Thyroid gland (tissue), 4 donors: ENCODE measurements at regions of chr10 and their contacts with region 1.

Region 1: DNA sequence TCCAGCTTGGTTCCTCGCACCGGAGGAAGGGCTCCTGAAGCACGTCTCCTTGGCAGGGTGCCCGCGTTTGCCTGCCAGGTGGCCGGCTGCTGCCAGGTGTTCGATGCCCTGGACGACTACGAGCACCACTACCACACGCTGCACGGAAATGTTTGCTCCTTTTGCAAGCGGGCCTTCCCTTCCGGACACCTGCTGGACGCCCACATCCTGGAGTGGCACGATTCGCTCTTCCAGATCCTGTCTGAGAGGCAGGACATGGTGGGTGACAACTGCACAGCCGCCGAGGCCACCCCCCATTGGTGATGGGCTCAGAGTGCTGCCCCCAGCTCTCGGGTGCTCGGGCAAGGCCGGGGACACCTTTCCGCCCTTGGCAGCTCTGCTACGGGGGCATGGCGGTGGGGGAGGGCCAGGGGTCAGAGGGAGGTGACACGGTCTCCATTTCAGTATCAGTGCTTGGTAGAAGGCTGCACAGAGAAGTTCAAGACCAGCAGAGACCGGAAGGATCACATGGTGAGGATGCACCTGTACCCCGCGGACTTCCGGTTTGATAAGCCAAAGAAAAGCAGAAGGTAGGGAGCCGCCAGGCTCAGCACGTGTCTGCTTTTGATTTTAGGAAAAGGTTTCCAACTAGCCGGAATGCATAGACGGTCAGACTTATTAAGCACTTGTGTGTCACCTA is 1.1 kb downstream of the ZNF511 start:
- DNase-seq: peak; percentile 44 to 52
- H3K4me3 ChIP-seq: no peak overlapping the region
- H3K27ac ChIP-seq: no peak overlapping the region
- H3K4me1 ChIP-seq: peaks cover 18 to 19% of the 10 kb centered on the region in 2 donors
- H3K27me3 ChIP-seq: no peaks in the 10 kb centered on the region
- CTCF ChIP-seq: no peak
- POLR2A ChIP-seq: no peak

Region 2: DNA sequence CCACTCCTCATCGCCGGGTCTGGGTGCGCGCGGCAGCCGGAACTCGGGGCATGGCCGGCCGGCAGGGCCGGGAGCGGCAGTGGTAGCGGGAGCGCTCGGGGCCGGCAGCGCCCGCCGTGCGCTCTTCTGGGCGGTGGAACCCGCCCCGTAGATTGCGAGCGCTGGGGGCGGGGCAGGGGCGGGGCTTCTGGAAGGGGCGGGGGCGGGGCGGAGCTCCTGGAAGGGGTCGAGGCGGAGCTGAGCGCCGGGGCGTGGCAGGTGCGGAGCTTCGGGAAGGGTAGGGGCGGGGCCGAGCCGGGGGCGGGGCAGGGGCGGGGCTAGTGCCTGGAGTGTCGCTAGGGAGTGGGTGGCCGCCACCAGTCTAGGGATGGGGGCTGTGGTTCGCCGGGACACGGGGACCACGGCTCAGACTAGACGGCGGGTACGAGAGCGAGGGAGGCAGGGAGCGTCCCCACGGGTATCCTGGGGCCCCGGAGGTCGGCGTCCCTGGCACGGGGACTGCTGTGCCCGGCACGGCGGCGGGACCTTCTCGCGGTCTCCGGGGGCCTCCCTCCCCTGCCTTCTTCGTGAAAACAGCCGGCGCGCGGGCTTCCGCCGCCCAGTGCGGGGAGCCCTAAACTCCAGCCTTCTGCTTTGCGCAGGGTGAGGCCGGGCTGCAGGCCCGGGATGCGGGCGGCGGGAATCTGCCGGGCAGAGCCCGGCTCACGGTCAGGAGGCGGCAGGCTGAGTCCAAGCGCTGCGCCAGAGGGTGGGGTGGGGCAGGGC is 1001.9 kb before region 1 on chr10 and contains the start of gene STK32C:
- intact Hi-C with region 1: no loop called
- DNase-seq: peak; percentile 89
- H3K4me3 ChIP-seq: peak within 1 kb of the TSS; percentile 82 to 95 (median 83)
- H3K27ac ChIP-seq: peak within 1 kb of the TSS in 1 of 3 donors; percentile 71
- H3K4me1 ChIP-seq: peaks cover 11 to 17% of the 10 kb centered on the region in 2 donors
- H3K27me3 ChIP-seq: no peaks in the 10 kb centered on the region
- CTCF ChIP-seq: no peak
- POLR2A ChIP-seq: peak in 1 of 2 donors; percentile 69
- total RNA-seq, gene STK32C: 3.3 to 5.7 (median 3.5) TPM

Region 3: DNA sequence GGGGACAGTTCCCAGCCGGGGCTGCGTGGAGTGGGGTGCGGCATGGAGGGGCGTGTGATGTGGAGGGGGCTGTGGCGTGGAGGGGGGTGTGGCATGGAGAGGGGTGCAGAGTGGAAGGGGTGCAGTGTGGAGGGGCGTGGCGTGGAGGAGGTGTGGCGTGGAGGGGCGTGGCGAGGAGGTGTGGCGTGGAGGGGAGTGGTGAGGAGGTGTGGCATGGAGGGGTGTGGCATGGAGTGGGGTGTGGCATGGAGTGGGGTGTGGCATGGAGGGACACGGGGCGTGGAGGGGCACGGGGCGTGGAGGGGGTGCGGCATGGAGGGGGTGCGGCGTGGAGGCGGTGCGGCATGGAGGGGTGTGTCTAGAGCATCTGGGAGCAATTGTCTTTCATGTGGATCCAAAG is 557.5 kb before region 1 on chr10:
- intact Hi-C with region 1: no loop called
- DNase-seq: no peak
- H3K4me3 ChIP-seq: no peak overlapping the region
- H3K27ac ChIP-seq: no peak overlapping the region
- H3K4me1 ChIP-seq: peaks cover 20% of the 10 kb centered on the region in 2 donors
- H3K27me3 ChIP-seq: no peaks in the 10 kb centered on the region
- CTCF ChIP-seq: no peak
- POLR2A ChIP-seq: no peak

Region 4: GRCh38 chr10:133261726-133262325 is 48.0 kb before region 1 on chr10:
- intact Hi-C with region 1: loop called (anchors 5 kb)
- DNase-seq: peak; percentile 86 to 89
- H3K4me3 ChIP-seq: peak overlapping the region; percentile 71 to 89 (median 84)
- H3K27ac ChIP-seq: peak overlapping the region; percentile 74 to 84 (median 80)
- H3K4me1 ChIP-seq: peaks cover 17 to 42% of the 10 kb centered on the region in 2 donors
- H3K27me3 ChIP-seq: no peaks in the 10 kb centered on the region
- CTCF ChIP-seq: no peak
- POLR2A ChIP-seq: peak in 1 of 2 donors; percentile 62

Region 5: DNA sequence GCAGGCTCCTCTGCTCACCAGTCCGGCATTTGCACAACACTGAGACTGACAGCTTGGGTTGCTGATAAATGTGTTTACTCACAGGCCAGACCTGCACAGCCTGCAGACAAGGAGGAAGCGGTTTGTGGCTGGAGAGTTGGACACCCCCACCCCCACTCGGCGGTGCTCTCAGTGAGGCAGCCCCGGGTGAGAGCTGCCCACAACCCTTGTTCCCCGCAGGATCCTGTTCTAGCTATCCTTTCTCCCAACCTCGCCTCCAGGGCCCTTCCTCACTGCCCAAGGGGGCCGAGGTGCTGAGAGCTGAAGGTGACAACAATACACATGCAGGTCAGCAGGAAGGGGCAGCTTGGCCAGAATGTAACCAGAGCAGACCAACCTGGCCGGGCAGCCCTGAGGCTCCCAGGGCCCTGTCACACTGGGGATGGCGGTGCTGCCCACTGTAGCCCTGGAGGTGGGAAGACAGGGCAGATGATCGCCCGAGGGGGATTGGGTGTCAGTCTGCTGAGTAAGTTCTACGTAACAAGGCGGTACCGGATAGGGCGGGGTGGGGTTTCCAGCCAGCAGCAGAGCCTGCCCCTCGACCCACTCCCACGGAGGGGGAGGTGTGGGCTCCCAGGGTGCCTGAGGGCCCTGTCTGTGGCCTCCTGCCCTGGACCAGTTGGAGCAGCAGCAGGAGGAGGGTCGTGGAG is 31.1 kb before region 1 on chr10:
- intact Hi-C with region 1: no loop called
- DNase-seq: peak in 1 of 2 donors; percentile 38
- H3K4me3 ChIP-seq: no peak overlapping the region
- H3K27ac ChIP-seq: no peak overlapping the region
- H3K4me1 ChIP-seq: peaks cover 6 to 12% of the 10 kb centered on the region in 2 donors
- H3K27me3 ChIP-seq: no peaks in the 10 kb centered on the region
- CTCF ChIP-seq: no peak
- POLR2A ChIP-seq: no peak

Region 6: GRCh38 chr10:133351408-133352318 is 41.8 kb after region 1 on chr10:
- intact Hi-C with region 1: no loop called
- DNase-seq: no peak
- H3K4me3 ChIP-seq: no peak overlapping the region
- H3K27ac ChIP-seq: no peak overlapping the region
- H3K4me1 ChIP-seq: peaks cover 0 to 4% of the 10 kb centered on the region in 2 donors
- H3K27me3 ChIP-seq: peaks cover 6% of the 10 kb centered on the region
- CTCF ChIP-seq: no peak
- POLR2A ChIP-seq: no peak

Region 7: GRCh38 chr10:133378251-133379096 is 68.6 kb after region 1 on chr10:
- intact Hi-C with region 1: loop called (anchors 5 kb)
- DNase-seq: peak; percentile 59 to 63
- H3K4me3 ChIP-seq: peak overlapping the region; percentile 18 to 72 (median 71)
- H3K27ac ChIP-seq: peak overlapping the region in 2 of 3 donors; percentile 0 to 42
- H3K4me1 ChIP-seq: peaks cover 16 to 19% of the 10 kb centered on the region in 2 donors
- H3K27me3 ChIP-seq: no peaks in the 10 kb centered on the region
- CTCF ChIP-seq: no peak
- POLR2A ChIP-seq: peak; percentile 8 to 22